Naive thymus-derived CD4-positive, alpha-beta T cell (primary cell): ENCODE measurements at regions of chrX and their contacts with region 1.

Region 1: GRCh38 chrX:145190801-145191389 is 56.4 kb upstream of the SPANXN1 start:
- DNase-seq: no peak
- ATAC-seq: no peak
- H3K4me3 ChIP-seq: no peak overlapping the region
- H3K4me3 Mint-ChIP-seq: no peak overlapping the region
- H3K27ac ChIP-seq: no peak overlapping the region
- H3K27ac Mint-ChIP-seq: no peak overlapping the region
- H3K4me1 ChIP-seq: no peaks in the 10 kb centered on the region
- H3K4me1 Mint-ChIP-seq: peaks cover 0 to 3% (median 0%) of the 10 kb centered on the region in 7 donors
- H3K27me3 ChIP-seq: no peaks in the 10 kb centered on the region
- H3K27me3 Mint-ChIP-seq: no peaks in the 10 kb centered on the region

Region 2: DNA sequence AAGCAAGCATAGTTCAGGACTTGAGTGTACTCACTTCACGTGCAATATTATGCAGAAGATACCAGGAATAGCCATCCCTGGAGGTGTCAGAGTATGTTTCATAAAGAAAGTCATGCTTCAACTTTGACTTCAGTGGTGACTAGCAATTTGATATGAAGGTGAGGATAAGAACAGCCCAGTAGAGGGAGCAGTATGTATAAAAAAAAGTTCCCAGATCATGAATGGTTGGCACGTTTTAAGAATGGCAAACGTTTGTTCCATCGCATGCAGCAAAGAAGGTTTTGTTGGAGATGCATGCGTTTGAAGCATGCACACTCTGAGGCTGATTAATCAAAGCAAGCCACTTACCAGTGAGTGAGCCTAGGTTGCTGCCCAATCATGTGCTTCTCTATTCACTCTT is 1521.5 kb before region 1 on chrX:
- CTCF ChIA-PET with region 1: no interaction called
- POLR2A ChIA-PET with region 1: no interaction called
- intact Hi-C with region 1: loop called in 1 of 2 experiments (anchors 5 kb)
- DNase-seq: no peak
- ATAC-seq: no peak
- H3K4me3 ChIP-seq: no peak overlapping the region
- H3K4me3 Mint-ChIP-seq: no peak overlapping the region
- H3K27ac ChIP-seq: no peak overlapping the region
- H3K27ac Mint-ChIP-seq: no peak overlapping the region
- H3K4me1 ChIP-seq: no peaks in the 10 kb centered on the region
- H3K4me1 Mint-ChIP-seq: no peaks in the 10 kb centered on the region
- H3K27me3 ChIP-seq: no peaks in the 10 kb centered on the region
- H3K27me3 Mint-ChIP-seq: no peaks in the 10 kb centered on the region